ENCODE measurements at regions of chr20 and their contacts with region 1.

Region 1: DNA sequence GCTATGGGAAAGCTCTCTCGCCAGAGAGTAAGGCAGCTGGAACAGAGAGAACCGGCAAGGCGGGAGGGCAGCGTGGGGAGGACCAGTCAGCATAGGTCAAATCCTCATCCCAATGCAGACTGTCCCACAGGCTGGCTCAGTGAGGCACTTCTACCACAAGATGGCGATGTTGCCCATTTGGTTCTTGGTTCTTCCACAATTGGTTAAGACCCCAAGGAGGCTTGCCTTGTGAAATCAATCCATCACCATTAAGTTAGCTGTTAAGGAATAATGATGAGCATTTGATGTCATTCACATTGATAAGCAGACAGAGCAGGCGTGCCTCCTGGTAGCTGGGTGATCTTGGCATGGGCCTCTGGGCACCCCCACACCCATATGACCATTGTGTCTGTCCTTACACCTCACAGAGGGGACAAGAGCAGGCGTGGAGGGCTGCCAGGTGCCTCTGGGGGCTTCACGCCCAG is 2.4 kb downstream of the CSTL1 start:
- DNase-seq: peak; percentile 45
- H3K4me3 Mint-ChIP-seq: no peak overlapping the region
- H3K27ac Mint-ChIP-seq: no peak overlapping the region
- H3K4me1 Mint-ChIP-seq: no peaks in the 10 kb centered on the region
- H3K27me3 Mint-ChIP-seq: no peaks in the 10 kb centered on the region
- CTCF ChIP-seq: peak; percentile 42

Region 2: DNA sequence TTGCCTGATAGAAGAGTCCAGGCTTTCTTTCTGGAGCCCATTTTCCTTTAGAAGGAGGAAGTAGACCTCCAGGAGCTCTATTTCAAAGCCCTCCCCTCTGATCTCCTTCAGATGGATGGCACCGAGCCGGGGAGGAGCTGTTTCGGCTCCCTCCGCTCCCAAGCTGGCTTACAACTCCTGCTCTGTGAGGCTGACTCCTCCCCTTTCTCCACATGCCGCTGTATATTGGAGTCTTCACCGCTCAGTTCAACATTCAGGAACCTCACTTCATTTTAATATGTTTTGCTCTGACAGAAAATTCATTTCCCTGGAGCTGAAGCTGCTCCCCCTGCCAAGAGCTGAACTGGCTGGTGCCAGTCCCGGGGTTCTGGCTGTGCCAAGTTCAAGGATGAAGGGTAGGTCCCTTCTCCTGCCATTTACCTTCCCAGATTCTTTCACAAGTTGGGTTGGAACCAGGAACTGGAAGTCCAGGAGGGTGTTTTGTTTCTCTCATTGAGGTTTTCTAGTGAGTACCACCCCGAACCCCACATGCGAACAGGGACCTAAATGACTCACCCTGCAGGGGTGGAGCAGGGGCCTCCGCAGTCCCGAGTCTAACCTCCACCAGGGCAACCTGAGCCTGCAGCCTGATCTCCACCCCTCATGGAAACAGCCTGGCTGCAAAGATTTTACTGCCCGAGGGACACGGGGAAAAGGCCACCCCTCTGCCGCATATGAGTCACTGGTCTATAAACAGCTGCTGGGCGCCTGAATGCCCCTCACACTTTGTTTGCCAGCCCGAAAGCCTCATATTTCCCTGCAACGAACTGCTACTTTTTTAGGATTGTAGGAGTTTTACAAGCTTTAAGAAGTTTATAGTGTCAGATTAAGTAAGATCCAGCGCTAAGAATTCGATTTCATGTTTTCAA is 788.9 kb before region 1 on chr20:
- CTCF ChIA-PET with region 1: no interaction called
- intact Hi-C with region 1: no loop called
- DNase-seq: no peak
- H3K4me3 Mint-ChIP-seq: no peak overlapping the region
- H3K27ac Mint-ChIP-seq: no peak overlapping the region
- H3K4me1 Mint-ChIP-seq: no peaks in the 10 kb centered on the region
- H3K27me3 Mint-ChIP-seq: no peaks in the 10 kb centered on the region
- CTCF ChIP-seq: no peak

Region 3: GRCh38 chr20:23606652-23607049 is 164.8 kb after region 1 on chr20:
- CTCF ChIA-PET with region 1: no interaction called
- intact Hi-C with region 1: loop called (anchors 1 kb)
- DNase-seq: peak; percentile 56
- H3K4me3 Mint-ChIP-seq: no peak overlapping the region
- H3K27ac Mint-ChIP-seq: no peak overlapping the region
- H3K4me1 Mint-ChIP-seq: no peaks in the 10 kb centered on the region
- H3K27me3 Mint-ChIP-seq: no peaks in the 10 kb centered on the region
- CTCF ChIP-seq: no peak

Region 4: DNA sequence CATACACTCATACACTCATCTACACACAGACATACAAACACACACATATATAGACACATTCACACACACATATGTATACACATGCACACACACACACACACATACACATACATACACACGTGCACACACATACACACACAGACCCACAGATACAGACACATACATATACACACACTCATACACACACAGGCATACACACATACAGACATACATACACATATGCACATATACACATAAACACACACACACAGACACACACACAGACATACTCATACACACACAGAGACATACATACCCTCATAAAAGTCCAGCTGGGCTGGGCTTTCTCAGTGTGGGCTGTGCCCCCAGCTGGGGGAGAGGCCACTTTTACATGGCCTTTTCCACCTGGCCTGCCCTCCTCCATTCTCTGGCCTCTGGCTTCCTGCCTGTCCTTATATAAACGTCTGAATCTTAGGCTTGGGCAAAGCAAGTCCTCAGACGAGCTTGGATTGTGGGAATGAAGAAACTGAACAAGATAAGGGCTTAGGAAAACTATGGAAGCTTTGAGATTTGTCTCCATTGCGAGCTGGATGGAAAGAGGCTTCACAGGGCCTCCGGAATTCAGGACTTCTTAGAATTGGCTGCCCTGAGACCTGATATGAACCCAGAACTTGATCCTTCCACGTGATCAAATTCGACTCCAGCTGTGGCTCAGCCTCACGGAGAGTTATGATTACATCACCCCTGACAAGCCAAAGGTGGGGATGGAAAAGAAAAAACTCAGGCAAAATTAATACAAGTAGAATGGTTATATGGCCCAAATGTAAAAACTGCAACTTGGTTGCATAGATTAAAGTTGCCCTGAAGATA is 218.3 kb after region 1 on chr20:
- CTCF ChIA-PET with region 1: no interaction called
- intact Hi-C with region 1: loop called (anchors 5 kb)
- DNase-seq: no peak
- H3K4me3 Mint-ChIP-seq: no peak overlapping the region
- H3K27ac Mint-ChIP-seq: no peak overlapping the region
- H3K4me1 Mint-ChIP-seq: peaks cover 15% of the 10 kb centered on the region
- H3K27me3 Mint-ChIP-seq: no peaks in the 10 kb centered on the region
- CTCF ChIP-seq: no peak

Region 5: DNA sequence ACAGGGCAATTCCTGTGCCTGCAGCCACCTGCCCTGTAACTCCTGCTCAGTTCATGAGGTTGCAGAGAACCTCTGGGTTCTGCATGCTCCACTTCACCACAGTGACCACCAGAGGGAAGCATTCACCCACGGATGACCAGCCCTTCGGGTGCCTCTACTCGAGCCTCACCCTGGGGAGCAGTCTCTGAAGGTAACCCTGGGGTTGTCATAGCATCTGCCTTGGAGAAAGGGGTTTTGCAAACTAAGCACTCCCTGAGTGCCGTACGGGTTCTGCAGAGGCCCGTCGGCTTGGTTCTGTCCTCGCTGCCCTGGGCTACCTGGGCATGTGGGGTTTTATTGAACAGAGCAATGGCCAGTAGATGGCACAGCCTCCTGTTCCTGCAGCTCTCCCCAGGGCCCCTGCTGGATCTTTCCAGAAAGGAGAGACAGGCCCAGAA is 447.9 kb after region 1 on chr20:
- CTCF ChIA-PET with region 1: no interaction called
- intact Hi-C with region 1: no loop called
- DNase-seq: peak; percentile 30
- H3K4me3 Mint-ChIP-seq: no peak overlapping the region
- H3K27ac Mint-ChIP-seq: no peak overlapping the region
- H3K4me1 Mint-ChIP-seq: no peaks in the 10 kb centered on the region
- H3K27me3 Mint-ChIP-seq: no peaks in the 10 kb centered on the region
- CTCF ChIP-seq: peak; percentile 12